Mammary epithelial cell (primary cell): ENCODE measurements at regions of chr5 and their contacts with region 1.

Region 1: GRCh38 chr5:115579747-115580173 is 22.5 kb downstream of the TICAM2 start:
- DNase-seq: no peak
- H3K4me3 ChIP-seq: no peak overlapping the region
- H3K27ac ChIP-seq: no peak overlapping the region
- H3K4me1 ChIP-seq: peaks cover 25% of the 10 kb centered on the region
- H3K27me3 ChIP-seq: no peaks in the 10 kb centered on the region
- CTCF ChIP-seq: no peak

Region 2: DNA sequence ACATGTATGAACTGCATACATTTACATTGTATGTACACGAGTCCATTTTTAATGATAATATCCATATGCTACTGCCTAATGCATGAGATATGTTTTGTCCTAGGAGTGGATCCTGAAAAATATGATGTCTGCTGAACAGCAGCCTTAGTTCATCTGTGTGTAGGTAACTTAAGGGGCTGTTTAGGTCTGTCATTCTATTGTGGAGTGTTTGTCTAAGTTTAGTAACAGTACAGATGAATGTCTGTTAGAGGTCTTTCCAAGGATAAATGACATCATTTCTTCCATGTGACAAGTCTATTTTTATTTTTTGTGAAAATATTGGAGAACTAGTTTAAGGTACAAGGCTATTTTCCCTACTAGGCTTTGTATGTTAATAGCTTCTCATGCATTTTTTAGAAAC is 260.8 kb before region 1 on chr5:
- CTCF ChIA-PET with region 1: no interaction called
- dilution Hi-C with region 1: loop called (anchors 25 kb)
- in situ Hi-C with region 1: loop called in 1 of 2 experiments (anchors 5 kb)
- intact Hi-C with region 1: no loop called
- DNase-seq: no peak
- H3K4me3 ChIP-seq: no peak overlapping the region
- H3K27ac ChIP-seq: no peak overlapping the region
- H3K4me1 ChIP-seq: peaks cover 6% of the 10 kb centered on the region
- H3K27me3 ChIP-seq: peaks cover 2% of the 10 kb centered on the region
- CTCF ChIP-seq: no peak

Region 3: DNA sequence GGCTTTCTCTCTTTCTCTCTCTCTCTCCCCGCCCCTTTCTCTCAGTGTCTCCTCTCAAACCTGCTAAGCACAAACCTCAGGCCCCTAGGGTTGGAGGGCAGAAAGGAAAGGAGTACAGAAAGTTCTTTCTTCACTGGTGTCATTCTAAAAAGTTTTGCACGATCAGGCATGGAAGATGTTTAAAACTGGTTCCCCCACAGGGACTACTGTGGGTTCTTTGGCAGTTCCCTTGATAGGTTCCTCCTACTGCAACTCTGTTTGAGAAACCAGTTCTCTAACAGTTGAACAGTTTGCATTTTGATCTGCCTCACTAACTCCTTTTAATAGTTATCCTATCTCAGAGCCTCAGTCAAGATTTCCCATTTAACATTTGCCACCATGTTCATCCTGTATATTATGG is 153.8 kb after region 1 on chr5:
- CTCF ChIA-PET with region 1: no interaction called
- dilution Hi-C with region 1: no loop called
- in situ Hi-C with region 1: no loop called
- intact Hi-C with region 1: no loop called
- DNase-seq: no peak
- H3K4me3 ChIP-seq: no peak overlapping the region
- H3K27ac ChIP-seq: no peak overlapping the region
- H3K4me1 ChIP-seq: no peaks in the 10 kb centered on the region
- H3K27me3 ChIP-seq: peaks cover 7% of the 10 kb centered on the region
- CTCF ChIP-seq: no peak